CD8-positive, alpha-beta T cell (primary cell): ENCODE measurements at regions of chr6 and their contacts with region 1.

Region 1: GRCh38 chr6:53484476-53485280 is 60.2 kb downstream of the GCLC start:
- DNase-seq: peak; percentile 42 to 80 (median 74)
- ATAC-seq: peak; percentile 79
- H3K4me3 ChIP-seq: no peak overlapping the region
- H3K4me3 Mint-ChIP-seq: no peak overlapping the region
- H3K27ac ChIP-seq: no peak overlapping the region
- H3K27ac Mint-ChIP-seq: no peak overlapping the region
- H3K4me1 ChIP-seq: no peaks in the 10 kb centered on the region
- H3K4me1 Mint-ChIP-seq: peaks cover 10% of the 10 kb centered on the region
- H3K27me3 ChIP-seq: peaks cover 0 to 4% of the 10 kb centered on the region in 2 experiments
- H3K27me3 Mint-ChIP-seq: peaks cover 33% of the 10 kb centered on the region
- CTCF ChIP-seq: peak; percentile 98

Region 2: DNA sequence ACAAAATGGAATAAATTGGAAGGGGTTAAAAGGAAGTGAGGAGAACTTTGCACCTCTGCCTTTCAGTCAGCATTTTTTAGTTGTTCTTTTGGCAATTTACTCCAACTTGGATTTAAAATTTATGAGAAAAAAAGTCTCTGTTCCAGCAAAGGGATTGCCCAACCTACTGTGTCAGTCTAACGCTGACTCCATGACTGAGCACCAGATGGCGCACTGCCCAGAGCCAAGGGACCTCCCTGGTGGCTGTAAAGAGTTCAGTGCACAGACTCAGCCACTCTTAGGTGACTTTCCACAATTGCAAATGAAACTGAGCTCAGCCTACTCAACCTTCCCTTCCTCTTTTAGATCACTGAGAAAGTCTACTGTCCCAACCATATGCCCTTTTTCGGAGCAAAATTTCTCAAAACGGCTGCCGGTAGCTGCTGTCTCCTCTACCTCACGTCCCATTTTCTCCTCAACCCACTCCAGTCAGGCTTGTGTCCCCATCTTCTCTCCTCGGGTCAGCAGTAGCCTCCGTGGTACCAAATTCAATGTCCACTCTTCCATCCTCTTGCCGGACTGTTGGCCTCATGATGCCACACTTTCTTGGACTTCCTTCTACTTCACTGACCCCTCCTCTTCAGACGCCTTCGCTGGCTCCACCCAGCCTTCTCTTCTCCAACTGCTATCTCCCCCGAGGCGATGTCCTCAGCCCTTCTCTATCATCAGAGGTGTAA is 760.1 kb before region 1 on chr6:
- CTCF ChIA-PET with region 1: no interaction called
- POLR2A ChIA-PET with region 1: no interaction called
- intact Hi-C with region 1: loop called in 1 of 2 experiments (anchors 1 kb)
- DNase-seq: peak; percentile 17 to 59 (median 44)
- ATAC-seq: peak; percentile 65
- H3K4me3 ChIP-seq: no peak overlapping the region
- H3K4me3 Mint-ChIP-seq: no peak overlapping the region
- H3K27ac ChIP-seq: no peak overlapping the region
- H3K27ac Mint-ChIP-seq: no peak overlapping the region
- H3K4me1 ChIP-seq: no peaks in the 10 kb centered on the region
- H3K4me1 Mint-ChIP-seq: no peaks in the 10 kb centered on the region
- H3K27me3 ChIP-seq: no peaks in the 10 kb centered on the region
- H3K27me3 Mint-ChIP-seq: peaks cover 2% of the 10 kb centered on the region
- CTCF ChIP-seq: peak; percentile 55

Region 3: GRCh38 chr6:52881996-52882841 is 602.5 kb before region 1 on chr6:
- CTCF ChIA-PET with region 1: no interaction called
- POLR2A ChIA-PET with region 1: no interaction called
- intact Hi-C with region 1: loop called in 1 of 2 experiments (anchors 1 kb)
- DNase-seq: peak; percentile 23 to 81 (median 61)
- ATAC-seq: peak; percentile 99
- H3K4me3 ChIP-seq: peak overlapping the region; percentile 48 to 53
- H3K4me3 Mint-ChIP-seq: peak overlapping the region; percentile 86
- H3K27ac ChIP-seq: no peak overlapping the region
- H3K27ac Mint-ChIP-seq: peak overlapping the region; percentile 30
- H3K4me1 ChIP-seq: no peaks in the 10 kb centered on the region
- H3K4me1 Mint-ChIP-seq: peaks cover 4% of the 10 kb centered on the region
- H3K27me3 ChIP-seq: no peaks in the 10 kb centered on the region
- H3K27me3 Mint-ChIP-seq: no peaks in the 10 kb centered on the region
- CTCF ChIP-seq: peak; percentile 72

Region 4: GRCh38 chr6:53437557-53438202 is 47.0 kb before region 1 on chr6:
- CTCF ChIA-PET with region 1: interaction called, 9 read pairs
- POLR2A ChIA-PET with region 1: no interaction called
- intact Hi-C with region 1: loop called in 1 of 2 experiments (anchors 1 kb)
- DNase-seq: peak in 4 of 9 experiments; percentile 4 to 56 (median 28)
- ATAC-seq: no peak
- H3K4me3 ChIP-seq: no peak overlapping the region
- H3K4me3 Mint-ChIP-seq: no peak overlapping the region
- H3K27ac ChIP-seq: no peak overlapping the region
- H3K27ac Mint-ChIP-seq: no peak overlapping the region
- H3K4me1 ChIP-seq: no peaks in the 10 kb centered on the region
- H3K4me1 Mint-ChIP-seq: no peaks in the 10 kb centered on the region
- H3K27me3 ChIP-seq: no peaks in the 10 kb centered on the region
- H3K27me3 Mint-ChIP-seq: peaks cover 4% of the 10 kb centered on the region
- CTCF ChIP-seq: peak; percentile 51

Region 5: DNA sequence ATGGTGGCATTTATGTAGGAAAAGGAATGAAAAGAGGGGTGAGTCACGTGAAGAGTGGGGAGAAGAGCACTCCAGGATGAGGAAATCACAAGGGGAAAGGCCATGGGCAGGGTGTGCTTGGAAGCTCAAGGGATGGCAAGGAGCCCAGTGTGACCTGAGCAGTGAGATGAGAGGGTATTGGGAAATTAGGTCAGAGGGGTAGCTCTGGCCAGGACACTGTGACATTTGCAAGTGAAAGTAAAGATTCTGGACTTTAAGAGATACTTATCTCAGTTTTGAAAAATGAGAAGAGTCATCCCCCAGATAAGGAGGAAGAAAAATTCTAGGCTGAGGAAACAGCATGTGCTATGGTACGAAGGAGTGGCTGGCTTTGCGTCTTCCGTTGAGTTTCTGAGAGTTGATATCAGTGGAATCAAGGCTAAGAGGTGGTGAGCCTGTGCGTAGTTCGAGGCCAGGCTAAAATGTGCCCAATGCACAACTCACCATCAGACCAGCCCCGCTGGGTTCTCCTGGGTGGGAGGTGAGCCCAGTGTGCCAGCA is 19.7 kb before region 1 on chr6:
- CTCF ChIA-PET with region 1: interaction called, 22 read pairs
- POLR2A ChIA-PET with region 1: no interaction called
- intact Hi-C with region 1: no loop called
- DNase-seq: no peak
- ATAC-seq: no peak
- H3K4me3 ChIP-seq: no peak overlapping the region
- H3K4me3 Mint-ChIP-seq: no peak overlapping the region
- H3K27ac ChIP-seq: no peak overlapping the region
- H3K27ac Mint-ChIP-seq: no peak overlapping the region
- H3K4me1 ChIP-seq: no peaks in the 10 kb centered on the region
- H3K4me1 Mint-ChIP-seq: no peaks in the 10 kb centered on the region
- H3K27me3 ChIP-seq: no peaks in the 10 kb centered on the region
- H3K27me3 Mint-ChIP-seq: no peaks in the 10 kb centered on the region
- CTCF ChIP-seq: no peak